MCF 10A (cell line): ENCODE measurements at regions of chr6 and their contacts with region 1.

Region 1: DNA sequence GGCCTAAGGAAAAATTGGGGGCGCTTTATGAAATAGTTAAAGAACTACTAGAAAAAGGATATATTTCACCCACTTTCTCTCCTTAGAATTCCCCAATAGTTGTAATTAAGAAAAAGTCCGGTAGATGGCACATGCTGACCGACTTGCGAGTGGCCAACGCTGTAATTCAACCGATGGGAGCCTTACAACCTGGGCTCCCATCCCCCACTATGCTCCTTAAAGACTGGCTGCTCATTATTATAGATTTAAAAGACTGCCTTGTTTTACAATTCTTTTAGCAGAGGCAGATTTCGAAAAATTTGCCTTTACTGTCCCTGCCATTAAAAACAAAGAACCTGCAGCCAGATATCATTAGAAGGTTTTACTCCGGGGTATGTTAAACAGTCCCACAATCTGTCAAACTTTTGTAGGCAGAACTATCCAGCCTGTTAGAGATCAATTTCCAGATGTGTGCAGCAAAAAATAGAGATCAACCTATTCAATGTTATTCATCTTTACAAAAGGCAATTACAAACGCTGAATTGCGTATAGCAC is 58.5 kb upstream of the PRSS16 start:
- DNase-seq: peak; percentile 88
- H3K4me3 Mint-ChIP-seq: peak overlapping the region; percentile 82
- H3K27ac Mint-ChIP-seq: peak overlapping the region; percentile 53
- H3K4me1 Mint-ChIP-seq: no peaks in the 10 kb centered on the region
- H3K27me3 Mint-ChIP-seq: no peaks in the 10 kb centered on the region
- CTCF ChIP-seq: peak; percentile 80

Region 2: GRCh38 chr6:27040244-27040981 is 148.5 kb before region 1 on chr6:
- CTCF ChIA-PET with region 1: no interaction called
- POLR2A ChIA-PET with region 1: no interaction called
- intact Hi-C with region 1: no loop called
- DNase-seq: no peak
- H3K4me3 Mint-ChIP-seq: no peak overlapping the region
- H3K27ac Mint-ChIP-seq: no peak overlapping the region
- H3K4me1 Mint-ChIP-seq: no peaks in the 10 kb centered on the region
- H3K27me3 Mint-ChIP-seq: peaks cover 30% of the 10 kb centered on the region
- CTCF ChIP-seq: no peak

Region 3: GRCh38 chr6:27157459-27158315 is 31.3 kb before region 1 on chr6:
- CTCF ChIA-PET with region 1: interaction called, 6 read pairs
- POLR2A ChIA-PET with region 1: interaction called, 5 read pairs
- intact Hi-C with region 1: loop called (anchors 1 kb)
- DNase-seq: peak; percentile 66
- H3K4me3 Mint-ChIP-seq: peak overlapping the region; percentile 80
- H3K27ac Mint-ChIP-seq: peak overlapping the region; percentile 53
- H3K4me1 Mint-ChIP-seq: peaks cover 29% of the 10 kb centered on the region
- H3K27me3 Mint-ChIP-seq: no peaks in the 10 kb centered on the region
- CTCF ChIP-seq: peak; percentile 31

Region 4: DNA sequence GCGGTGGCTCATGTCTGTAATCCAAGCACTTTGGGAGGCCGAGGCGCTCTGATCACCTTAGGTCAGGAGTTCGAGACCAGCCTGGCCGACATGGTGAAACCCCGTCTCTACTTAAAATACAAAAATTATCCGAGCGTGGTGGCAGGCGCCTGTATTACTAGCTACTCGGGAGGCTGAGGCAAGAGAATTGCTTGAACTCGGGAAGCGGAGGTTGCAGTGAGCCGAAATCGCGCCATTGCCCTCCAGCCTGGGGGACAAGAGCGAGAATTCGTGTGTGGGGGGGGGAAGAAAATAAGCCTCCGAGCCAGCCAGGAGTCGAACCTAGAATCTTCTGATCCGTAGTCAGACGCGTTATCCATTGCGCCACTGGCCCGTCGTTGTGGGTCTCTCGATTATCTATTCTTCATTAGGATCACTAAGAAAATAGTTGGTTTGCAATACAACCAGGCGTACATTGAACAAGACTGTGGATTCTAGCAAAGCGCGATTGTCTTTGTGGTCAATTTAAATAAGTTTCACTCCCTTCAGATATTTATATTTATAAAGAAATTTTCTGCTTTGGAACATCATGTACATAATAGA is 24.7 kb after region 1 on chr6:
- CTCF ChIA-PET with region 1: interaction called, 3 read pairs
- POLR2A ChIA-PET with region 1: no interaction called
- intact Hi-C with region 1: loop called (anchors 2 kb)
- DNase-seq: peak; percentile 68
- H3K4me3 Mint-ChIP-seq: peak overlapping the region; percentile 88
- H3K27ac Mint-ChIP-seq: no peak overlapping the region
- H3K4me1 Mint-ChIP-seq: no peaks in the 10 kb centered on the region
- H3K27me3 Mint-ChIP-seq: no peaks in the 10 kb centered on the region
- CTCF ChIP-seq: no peak

Region 5: GRCh38 chr6:27295301-27296081 is 106.5 kb after region 1 on chr6:
- CTCF ChIA-PET with region 1: no interaction called
- POLR2A ChIA-PET with region 1: interaction called, 11 read pairs
- intact Hi-C with region 1: no loop called
- DNase-seq: peak; percentile 87
- H3K4me3 Mint-ChIP-seq: peak overlapping the region; percentile 83
- H3K27ac Mint-ChIP-seq: peak overlapping the region; percentile 29
- H3K4me1 Mint-ChIP-seq: peaks cover 32% of the 10 kb centered on the region
- H3K27me3 Mint-ChIP-seq: no peaks in the 10 kb centered on the region
- CTCF ChIP-seq: no peak

Region 6: DNA sequence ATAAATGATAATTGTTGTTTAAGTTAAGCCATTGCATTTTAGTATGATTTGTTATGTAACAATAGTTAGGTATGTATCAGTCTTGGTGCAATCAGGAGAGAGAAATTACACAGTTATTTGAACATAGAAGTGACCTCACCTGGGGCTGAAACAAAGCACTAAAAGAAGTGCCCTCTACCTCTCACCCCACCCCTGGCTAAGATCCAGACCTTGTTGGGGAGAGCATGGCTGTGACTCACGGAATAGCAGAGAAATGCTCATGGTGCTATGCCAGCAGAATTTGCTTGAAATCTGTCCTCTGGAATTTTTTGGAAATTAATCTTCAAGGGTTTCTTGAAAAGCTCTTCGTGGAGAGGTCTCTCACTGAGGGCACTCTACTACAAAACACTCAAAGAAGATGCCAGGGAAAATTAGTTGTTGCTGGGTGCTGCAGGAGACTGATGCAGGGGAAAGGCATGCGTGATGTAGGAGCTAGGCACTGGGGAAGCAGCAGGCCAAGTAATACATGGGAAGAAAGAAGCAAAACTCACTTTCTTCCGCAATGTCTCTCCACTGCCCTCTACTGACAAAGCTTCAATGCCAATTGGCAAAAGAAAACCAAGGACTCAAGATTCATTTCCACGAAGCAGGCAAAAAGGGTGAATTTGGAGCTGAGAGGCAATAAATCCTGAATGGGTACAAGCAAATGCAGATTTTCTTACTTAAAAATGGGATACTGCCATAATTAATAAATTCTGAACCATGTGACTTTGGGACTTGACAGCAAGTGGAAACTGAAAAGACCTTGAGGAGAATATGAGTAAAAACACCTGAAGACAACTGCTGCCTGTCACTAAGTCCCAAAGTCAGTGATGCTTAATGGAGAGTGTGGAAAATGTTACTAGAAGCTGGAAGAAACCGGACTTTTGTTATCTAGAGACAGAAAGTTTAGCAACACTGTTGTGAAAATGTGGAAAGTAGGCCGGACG is 420.2 kb after region 1 on chr6:
- CTCF ChIA-PET with region 1: interaction called, 4 read pairs
- POLR2A ChIA-PET with region 1: interaction called, 11 read pairs
- intact Hi-C with region 1: loop called (anchors 1 kb)
- DNase-seq: peak; percentile 89
- H3K4me3 Mint-ChIP-seq: peak overlapping the region; percentile 47
- H3K27ac Mint-ChIP-seq: peak overlapping the region; percentile 83
- H3K4me1 Mint-ChIP-seq: peaks cover 22% of the 10 kb centered on the region
- H3K27me3 Mint-ChIP-seq: no peaks in the 10 kb centered on the region
- CTCF ChIP-seq: peak; percentile 77

Region 7: GRCh38 chr6:27795697-27796494 is 606.9 kb after region 1 on chr6:
- CTCF ChIA-PET with region 1: interaction called, 3 read pairs
- POLR2A ChIA-PET with region 1: interaction called, 12 read pairs
- intact Hi-C with region 1: no loop called
- DNase-seq: peak; percentile 91
- H3K4me3 Mint-ChIP-seq: no peak overlapping the region
- H3K27ac Mint-ChIP-seq: no peak overlapping the region
- H3K4me1 Mint-ChIP-seq: peaks cover 5% of the 10 kb centered on the region
- H3K27me3 Mint-ChIP-seq: no peaks in the 10 kb centered on the region
- CTCF ChIP-seq: peak; percentile 79